ENCODE measurements at regions of chr12 and their contacts with region 1.

Region 1: DNA sequence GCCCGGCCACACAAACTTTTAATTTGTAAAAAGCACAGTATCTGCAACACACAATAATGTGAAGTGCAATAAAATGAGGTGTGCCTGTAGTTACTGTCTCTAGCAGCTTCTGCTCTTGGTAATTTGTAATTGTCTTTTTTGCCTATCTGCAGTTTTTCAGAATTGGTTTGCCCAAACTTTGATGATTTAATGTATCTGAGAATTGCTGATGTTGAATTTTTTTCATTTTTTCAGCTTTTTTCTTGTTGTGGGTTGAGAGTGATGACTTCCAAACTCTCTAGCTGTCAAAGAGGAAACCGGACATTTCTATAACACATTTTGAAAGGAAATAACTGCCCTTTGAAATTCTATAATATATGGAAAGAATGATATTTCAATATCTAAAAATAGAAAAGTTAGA is 236.9 kb downstream of the RERGL start:
- DNase-seq: no peak
- H3K4me3 Mint-ChIP-seq: no peak overlapping the region
- H3K27ac Mint-ChIP-seq: no peak overlapping the region
- H3K4me1 Mint-ChIP-seq: no peaks in the 10 kb centered on the region
- H3K27me3 Mint-ChIP-seq: no peaks in the 10 kb centered on the region

Region 2: DNA sequence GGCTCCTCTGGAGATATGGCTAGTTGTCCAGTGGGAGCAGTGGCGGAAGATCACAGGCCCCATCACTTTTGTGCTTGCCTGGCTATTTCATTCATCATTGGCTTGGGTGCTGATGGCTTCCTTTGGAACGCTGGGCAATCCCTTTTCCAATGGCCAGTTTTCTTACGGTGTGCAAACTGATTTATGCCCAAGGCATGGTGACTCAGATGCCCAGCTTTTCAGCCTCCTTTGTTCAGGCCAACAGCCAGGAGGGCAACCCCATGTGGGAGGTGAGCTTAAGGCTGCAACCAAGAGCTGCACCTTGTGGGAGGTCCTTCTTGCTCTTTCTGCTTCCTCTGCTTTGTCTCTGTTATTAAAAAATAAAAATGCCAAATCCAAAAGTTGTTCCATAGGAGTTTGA is 313.9 kb before region 1 on chr12:
- CTCF ChIA-PET with region 1: no interaction called
- intact Hi-C with region 1: no loop called
- DNase-seq: no peak
- H3K4me3 Mint-ChIP-seq: no peak overlapping the region
- H3K27ac Mint-ChIP-seq: no peak overlapping the region
- H3K4me1 Mint-ChIP-seq: no peaks in the 10 kb centered on the region
- H3K27me3 Mint-ChIP-seq: no peaks in the 10 kb centered on the region

Region 3: DNA sequence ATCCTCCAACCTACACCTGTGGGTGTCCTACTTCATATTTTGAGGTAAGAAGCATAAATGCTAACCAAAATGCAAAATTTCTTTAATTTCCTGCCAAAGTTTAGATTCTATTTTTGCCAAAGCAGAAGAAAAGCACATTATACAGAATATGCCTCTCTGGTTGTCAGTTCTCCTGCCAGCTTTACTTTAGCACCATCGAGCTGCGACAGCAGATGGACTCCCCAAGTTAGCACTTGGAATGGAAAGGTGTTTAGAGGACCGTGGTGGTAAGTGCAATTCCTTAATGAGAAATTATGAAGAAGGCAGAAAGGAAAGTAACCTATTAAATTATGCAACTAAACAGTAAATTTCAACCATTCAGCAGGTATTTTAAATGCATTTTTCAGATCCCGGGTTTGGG is 89.7 kb before region 1 on chr12:
- CTCF ChIA-PET with region 1: no interaction called
- intact Hi-C with region 1: loop called (anchors 2 kb)
- DNase-seq: no peak
- H3K4me3 Mint-ChIP-seq: no peak overlapping the region
- H3K27ac Mint-ChIP-seq: no peak overlapping the region
- H3K4me1 Mint-ChIP-seq: no peaks in the 10 kb centered on the region
- H3K27me3 Mint-ChIP-seq: no peaks in the 10 kb centered on the region

Region 4: GRCh38 chr12:17866802-17867201 is 13.7 kb after region 1 on chr12:
- CTCF ChIA-PET with region 1: no interaction called
- intact Hi-C with region 1: no loop called
- DNase-seq: no peak
- H3K4me3 Mint-ChIP-seq: no peak overlapping the region
- H3K27ac Mint-ChIP-seq: no peak overlapping the region
- H3K4me1 Mint-ChIP-seq: no peaks in the 10 kb centered on the region
- H3K27me3 Mint-ChIP-seq: no peaks in the 10 kb centered on the region